ENCODE measurements at regions of chr7 and their contacts with region 1.

Region 1: DNA sequence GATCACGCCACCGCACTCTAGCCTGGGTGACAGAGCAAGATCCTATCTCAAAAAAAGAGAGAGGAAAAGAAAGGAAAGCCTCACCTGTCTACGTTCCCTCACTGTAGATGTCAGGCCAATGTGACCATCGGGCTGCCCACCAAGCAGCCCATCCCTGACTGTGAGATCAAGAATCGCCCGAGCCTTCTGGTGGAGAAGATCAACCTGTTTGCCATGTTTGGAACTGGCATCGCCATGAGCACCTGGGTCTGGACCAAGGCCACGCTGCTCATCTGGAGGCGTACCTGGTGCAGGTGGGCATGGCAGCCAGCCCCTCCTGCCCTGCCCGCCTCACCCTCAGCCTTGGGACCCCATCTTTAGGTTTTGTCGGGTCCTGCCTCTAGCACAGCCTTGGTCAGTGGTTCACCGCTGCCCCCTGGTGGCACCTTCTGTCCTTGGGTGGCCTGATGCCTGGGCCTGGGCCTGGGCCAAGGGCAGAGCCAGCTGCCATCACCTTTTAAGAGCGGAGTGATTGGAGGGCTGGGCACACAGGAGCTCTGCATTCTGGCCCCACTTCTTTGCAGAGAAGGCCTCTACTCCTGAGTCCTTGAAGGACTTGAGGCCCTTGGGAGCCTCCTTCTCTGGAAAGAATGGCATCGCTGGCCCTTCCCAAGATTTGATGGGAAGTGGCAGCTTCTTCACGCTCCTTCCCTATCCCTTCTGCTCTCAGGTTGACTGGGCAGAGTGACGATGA is 14.4 kb upstream of the AHCYL2 start:
- DNase-seq: peak; percentile 94

Region 2: GRCh38 chr7:129054438-129055293 is 155.8 kb before region 1 on chr7 and contains the start of gene TNPO3:
- intact Hi-C with region 1: no loop called
- DNase-seq: peak; percentile 98
- total RNA-seq, gene TNPO3: 25.4 to 27.9 TPM

Region 3: DNA sequence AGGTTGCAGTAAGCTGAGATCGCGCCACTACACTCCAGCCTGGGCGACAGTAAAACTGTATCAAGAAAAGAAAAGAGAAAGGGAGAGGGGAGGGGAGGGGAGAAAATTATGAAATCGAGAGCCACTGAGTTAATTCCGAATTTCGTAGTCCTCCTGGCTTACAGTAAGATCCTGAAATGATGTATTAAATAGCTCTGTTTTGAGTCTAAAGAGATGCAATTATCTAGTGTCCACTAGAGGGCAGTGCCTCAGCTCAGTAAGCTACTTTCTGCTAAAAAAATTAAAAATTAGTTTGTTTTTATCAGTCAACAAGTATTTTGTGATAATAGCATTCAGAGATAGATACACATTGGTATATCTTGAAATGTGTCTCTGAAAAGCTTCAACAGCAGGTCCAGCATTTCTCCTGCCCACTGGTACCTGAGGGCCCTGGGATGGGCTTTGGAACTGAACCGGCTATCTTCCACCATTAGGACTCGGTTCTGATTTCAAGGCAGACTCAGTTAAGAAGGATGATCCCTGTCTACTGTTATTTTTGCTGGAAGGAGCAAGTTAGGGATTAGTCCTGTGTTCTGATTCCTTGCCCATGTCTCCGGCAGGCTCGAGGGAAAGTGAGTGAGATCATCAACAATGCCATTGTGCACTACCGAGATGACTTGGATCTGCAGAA is 46.4 kb before region 1 on chr7:
- intact Hi-C with region 1: loop called (anchors 2 to 5 kb)
- DNase-seq: no peak